ENCODE measurements at regions of chr14 and their contacts with region 1.

Region 1: GRCh38 chr14:72516936-72517700 is 376.8 kb downstream of the DPF3 start:
- DNase-seq: peak; percentile 42 to 78 (median 74)
- ATAC-seq: peak; percentile 75
- H3K4me3 ChIP-seq: no peak overlapping the region
- H3K4me3 Mint-ChIP-seq: peak overlapping the region in 9 of 10 donors; percentile 11 to 77 (median 40)
- H3K27ac ChIP-seq: no peak overlapping the region
- H3K27ac Mint-ChIP-seq: peak overlapping the region in 4 of 9 donors; percentile 41 to 61 (median 48)
- H3K4me1 ChIP-seq: peaks cover 28 to 36% of the 10 kb centered on the region in 2 donors
- H3K4me1 Mint-ChIP-seq: peaks cover 28 to 82% (median 44%) of the 10 kb centered on the region in 7 donors
- H3K27me3 ChIP-seq: no peaks in the 10 kb centered on the region
- H3K27me3 Mint-ChIP-seq: peaks cover 0 to under 1% (median 0%) of the 10 kb centered on the region in 5 donors

Region 2: GRCh38 chr14:72023722-72024407 is 493.3 kb before region 1 on chr14:
- CTCF ChIA-PET with region 1: no interaction called
- POLR2A ChIA-PET with region 1: no interaction called
- intact Hi-C with region 1: loop called in 1 of 2 experiments (anchors 1 kb)
- DNase-seq: peak in 5 of 9 donors; percentile 6 to 33 (median 17)
- ATAC-seq: peak; percentile 61
- H3K4me3 ChIP-seq: no peak overlapping the region
- H3K4me3 Mint-ChIP-seq: no peak overlapping the region
- H3K27ac ChIP-seq: no peak overlapping the region
- H3K27ac Mint-ChIP-seq: no peak overlapping the region
- H3K4me1 ChIP-seq: no peaks in the 10 kb centered on the region
- H3K4me1 Mint-ChIP-seq: peaks cover 0 to 9% (median 0%) of the 10 kb centered on the region in 7 donors
- H3K27me3 ChIP-seq: no peaks in the 10 kb centered on the region
- H3K27me3 Mint-ChIP-seq: peaks cover 35 to 49% (median 40%) of the 10 kb centered on the region in 5 donors

Region 3: DNA sequence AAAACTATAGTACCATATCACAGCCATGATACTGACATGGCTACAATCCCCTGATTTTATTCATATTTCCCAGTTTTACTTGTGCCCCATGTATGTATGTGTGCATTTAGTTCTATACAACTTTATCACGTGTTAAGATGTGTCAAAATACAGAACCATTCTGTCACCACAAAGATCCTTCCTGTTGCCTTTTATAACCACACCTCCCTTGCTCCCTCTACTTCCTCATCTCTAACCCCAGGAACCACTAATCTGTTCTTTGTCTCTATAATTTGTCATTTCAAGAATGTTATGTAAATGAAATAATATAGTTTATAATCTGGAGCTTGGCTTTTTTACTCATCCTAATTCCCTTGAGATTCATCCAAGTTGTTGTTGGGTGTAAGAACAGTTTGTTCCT is 18.4 kb after region 1 on chr14:
- CTCF ChIA-PET with region 1: interaction called, 5 read pairs
- POLR2A ChIA-PET with region 1: interaction called, 3 read pairs
- intact Hi-C with region 1: loop called in 1 of 2 experiments (anchors 1 kb)
- DNase-seq: peak in 4 of 9 donors; percentile 26 to 45 (median 34)
- ATAC-seq: peak; percentile 78
- H3K4me3 ChIP-seq: no peak overlapping the region
- H3K4me3 Mint-ChIP-seq: peak overlapping the region in 9 of 10 donors; percentile 8 to 69 (median 55)
- H3K27ac ChIP-seq: no peak overlapping the region
- H3K27ac Mint-ChIP-seq: peak overlapping the region in 5 of 9 donors; percentile 1 to 35 (median 32)
- H3K4me1 ChIP-seq: peaks cover 43 to 47% of the 10 kb centered on the region in 2 donors
- H3K4me1 Mint-ChIP-seq: peaks cover 43 to 75% (median 64%) of the 10 kb centered on the region in 7 donors
- H3K27me3 ChIP-seq: no peaks in the 10 kb centered on the region
- H3K27me3 Mint-ChIP-seq: peaks cover 0 to 23% (median 0%) of the 10 kb centered on the region in 5 donors

Region 4: DNA sequence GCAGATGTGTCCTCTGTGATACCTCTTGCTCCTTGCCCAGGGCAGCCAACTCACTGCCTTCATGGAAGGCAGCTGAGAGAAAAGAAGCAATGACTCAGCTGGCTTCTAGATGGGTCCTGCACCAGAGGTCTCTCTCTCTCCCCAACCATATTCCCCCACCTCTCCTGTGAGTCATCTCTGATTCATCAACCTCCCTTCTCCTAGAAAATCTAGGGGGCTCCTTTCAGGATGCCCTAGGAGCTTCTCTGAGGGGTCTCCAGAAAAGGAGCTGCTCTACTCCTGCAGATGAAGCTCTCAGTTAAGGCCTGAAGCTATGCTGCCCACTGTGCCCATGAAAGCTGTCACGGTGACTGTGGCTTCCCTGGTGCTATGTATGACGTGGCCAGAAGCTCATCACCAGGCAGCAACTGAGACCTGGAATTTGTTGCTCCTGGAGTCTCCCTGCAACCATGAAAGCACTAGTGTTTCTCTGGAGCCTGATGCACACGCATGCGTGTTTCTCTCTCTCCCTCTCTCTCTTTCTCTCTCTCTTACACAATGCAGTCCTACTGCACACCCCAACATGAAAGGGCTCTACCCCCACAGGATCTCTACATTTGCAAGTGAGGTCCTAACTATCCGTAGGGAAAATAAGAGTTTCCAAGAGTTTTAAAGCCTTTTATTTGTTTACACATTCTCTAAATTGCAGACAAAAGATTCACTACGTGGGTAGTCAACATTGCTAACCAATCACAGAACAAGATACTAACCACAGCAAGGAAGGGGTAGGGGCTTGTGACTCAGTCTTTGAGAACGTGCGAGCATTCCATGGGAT is 91.5 kb after region 1 on chr14:
- CTCF ChIA-PET with region 1: no interaction called
- POLR2A ChIA-PET with region 1: no interaction called
- intact Hi-C with region 1: no loop called
- DNase-seq: peak in 1 of 9 donors; percentile 16
- ATAC-seq: no peak
- H3K4me3 ChIP-seq: no peak overlapping the region
- H3K4me3 Mint-ChIP-seq: no peak overlapping the region
- H3K27ac ChIP-seq: no peak overlapping the region
- H3K27ac Mint-ChIP-seq: no peak overlapping the region
- H3K4me1 ChIP-seq: no peaks in the 10 kb centered on the region
- H3K4me1 Mint-ChIP-seq: peaks cover 0 to 2% (median 0%) of the 10 kb centered on the region in 7 donors
- H3K27me3 ChIP-seq: no peaks in the 10 kb centered on the region
- H3K27me3 Mint-ChIP-seq: peaks cover 0 to 35% (median 5%) of the 10 kb centered on the region in 5 donors

Region 5: GRCh38 chr14:72665259-72665658 is 148.1 kb after region 1 on chr14:
- CTCF ChIA-PET with region 1: no interaction called
- POLR2A ChIA-PET with region 1: no interaction called
- intact Hi-C with region 1: no loop called
- DNase-seq: no peak
- ATAC-seq: no peak
- H3K4me3 ChIP-seq: no peak overlapping the region
- H3K4me3 Mint-ChIP-seq: no peak overlapping the region
- H3K27ac ChIP-seq: no peak overlapping the region
- H3K27ac Mint-ChIP-seq: no peak overlapping the region
- H3K4me1 ChIP-seq: no peaks in the 10 kb centered on the region
- H3K4me1 Mint-ChIP-seq: peaks cover 0 to 20% (median 0%) of the 10 kb centered on the region in 7 donors
- H3K27me3 ChIP-seq: no peaks in the 10 kb centered on the region
- H3K27me3 Mint-ChIP-seq: peaks cover 6 to 22% (median 13%) of the 10 kb centered on the region in 5 donors

Region 6: DNA sequence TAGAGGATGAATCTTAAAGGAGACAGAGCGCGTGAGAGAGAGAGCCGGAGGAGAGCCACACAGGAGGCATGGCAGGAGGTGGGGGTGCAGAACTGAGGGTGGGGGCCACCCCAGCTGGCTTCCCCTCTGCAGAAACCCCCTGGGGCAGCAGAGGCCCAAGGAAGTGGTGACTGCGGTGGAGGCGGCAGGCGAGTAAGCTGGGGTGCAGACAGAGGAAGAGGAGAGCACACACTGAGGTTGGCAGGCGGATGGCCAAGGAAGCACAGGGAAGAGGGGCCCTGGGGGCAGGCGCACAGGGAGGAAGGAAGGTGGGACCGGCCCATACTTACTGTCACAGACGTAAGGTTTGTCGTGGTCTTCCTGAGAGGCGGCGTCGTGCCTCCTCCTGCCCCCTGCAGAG is 197.0 kb after region 1 on chr14:
- CTCF ChIA-PET with region 1: no interaction called
- POLR2A ChIA-PET with region 1: no interaction called
- intact Hi-C with region 1: loop called in 1 of 2 experiments (anchors 5 kb)
- DNase-seq: peak in 8 of 9 donors; percentile 13 to 56 (median 30)
- ATAC-seq: peak; percentile 73
- H3K4me3 ChIP-seq: no peak overlapping the region
- H3K4me3 Mint-ChIP-seq: peak overlapping the region; percentile 23 to 80 (median 54)
- H3K27ac ChIP-seq: no peak overlapping the region
- H3K27ac Mint-ChIP-seq: peak overlapping the region in 8 of 9 donors; percentile 4 to 65 (median 22)
- H3K4me1 ChIP-seq: peaks cover 22 to 27% of the 10 kb centered on the region in 2 donors
- H3K4me1 Mint-ChIP-seq: peaks cover 33 to 55% (median 37%) of the 10 kb centered on the region in 7 donors
- H3K27me3 ChIP-seq: no peaks in the 10 kb centered on the region
- H3K27me3 Mint-ChIP-seq: peaks cover 0 to 3% (median 0%) of the 10 kb centered on the region in 5 donors

Region 7: GRCh38 chr14:72893636-72894321 is 376.7 kb after region 1 on chr14 and contains the start of gene DPF3:
- CTCF ChIA-PET with region 1: interaction called, 6 read pairs
- POLR2A ChIA-PET with region 1: no interaction called
- intact Hi-C with region 1: loop called in 1 of 2 experiments (anchors 1 kb)
- DNase-seq: peak; percentile 80 to 91 (median 86)
- ATAC-seq: peak; percentile 99
- H3K4me3 ChIP-seq: peak within 1 kb of the TSS; percentile 74
- H3K4me3 Mint-ChIP-seq: peak within 1 kb of the TSS; percentile 91 to 99 (median 97)
- H3K27ac ChIP-seq: peak within 1 kb of the TSS; percentile 51
- H3K27ac Mint-ChIP-seq: peak within 1 kb of the TSS; percentile 22 to 94 (median 56)
- H3K4me1 ChIP-seq: peaks cover 9 to 20% of the 10 kb centered on the region in 2 donors
- H3K4me1 Mint-ChIP-seq: peaks cover 20 to 36% (median 24%) of the 10 kb centered on the region in 7 donors
- H3K27me3 ChIP-seq: peaks cover 6 to 10% of the 10 kb centered on the region in 2 donors
- H3K27me3 Mint-ChIP-seq: peaks cover 37 to 72% (median 53%) of the 10 kb centered on the region in 5 donors
- total RNA-seq, gene DPF3: 0.24 to 5.5 (median 0.61) TPM in 4 of 5 experiments, not detected in the other

Region 8: GRCh38 chr14:72948481-72949138 is 431.5 kb after region 1 on chr14:
- CTCF ChIA-PET with region 1: interaction called, 4 read pairs
- POLR2A ChIA-PET with region 1: no interaction called
- intact Hi-C with region 1: loop called (anchors 1 kb)
- DNase-seq: peak in 8 of 9 donors; percentile 24 to 63 (median 48)
- ATAC-seq: peak; percentile 65
- H3K4me3 ChIP-seq: no peak overlapping the region
- H3K4me3 Mint-ChIP-seq: no peak overlapping the region
- H3K27ac ChIP-seq: no peak overlapping the region
- H3K27ac Mint-ChIP-seq: no peak overlapping the region
- H3K4me1 ChIP-seq: no peaks in the 10 kb centered on the region
- H3K4me1 Mint-ChIP-seq: peaks cover 0 to 8% (median 0%) of the 10 kb centered on the region in 7 donors
- H3K27me3 ChIP-seq: no peaks in the 10 kb centered on the region
- H3K27me3 Mint-ChIP-seq: no peaks in the 10 kb centered on the region

Measured in naive thymus-derived CD4-positive, alpha-beta T cell (primary cell).